Activated B cell treated with CpG ODN at 0.5 μM for 24 hours (primary cell): ENCODE measurements at regions of chr4 and their contacts with region 1.

Region 1: DNA sequence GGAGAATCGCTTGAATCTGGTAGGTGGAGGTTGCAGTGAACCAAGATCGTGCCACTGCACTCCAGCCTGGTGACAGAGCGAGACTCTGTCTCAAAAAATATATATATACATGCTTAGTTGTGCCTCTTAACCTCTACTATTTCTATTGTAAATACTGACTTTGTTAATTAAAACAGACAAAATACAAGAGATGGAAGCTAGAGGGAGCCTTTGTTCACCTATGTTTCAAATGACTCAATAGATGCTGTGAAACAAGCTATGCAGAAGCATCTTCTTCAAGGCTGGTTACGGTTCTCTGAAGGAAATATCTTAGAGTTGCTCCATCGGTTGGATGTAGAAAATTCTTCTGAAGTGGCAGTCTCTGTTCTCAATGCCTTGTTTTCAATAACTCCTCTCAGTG is 6.2 kb downstream of the NCAPG start:
- DNase-seq: no peak
- ATAC-seq: peak; percentile 82
- H3K4me3 Mint-ChIP-seq: no peak overlapping the region
- H3K27ac Mint-ChIP-seq: no peak overlapping the region
- H3K4me1 Mint-ChIP-seq: peaks cover 8% of the 10 kb centered on the region
- H3K27me3 Mint-ChIP-seq: no peaks in the 10 kb centered on the region
- CTCF ChIP-seq: no peak

Region 2: GRCh38 chr4:18138076-18138665 is 321.2 kb after region 1 on chr4:
- CTCF ChIA-PET with region 1: interaction called, 3 read pairs
- POLR2A ChIA-PET with region 1: no interaction called
- intact Hi-C with region 1: loop called (anchors 2 kb)
- DNase-seq: no peak
- ATAC-seq: no peak
- H3K4me3 Mint-ChIP-seq: no peak overlapping the region
- H3K27ac Mint-ChIP-seq: no peak overlapping the region
- H3K4me1 Mint-ChIP-seq: no peaks in the 10 kb centered on the region
- H3K27me3 Mint-ChIP-seq: peaks cover 5% of the 10 kb centered on the region
- CTCF ChIP-seq: no peak

Region 3: GRCh38 chr4:18366892-18367291 is 549.9 kb after region 1 on chr4:
- CTCF ChIA-PET with region 1: interaction called, 28 read pairs
- POLR2A ChIA-PET with region 1: no interaction called
- intact Hi-C with region 1: no loop called
- DNase-seq: no peak
- ATAC-seq: no peak
- H3K4me3 Mint-ChIP-seq: no peak overlapping the region
- H3K27ac Mint-ChIP-seq: no peak overlapping the region
- H3K4me1 Mint-ChIP-seq: no peaks in the 10 kb centered on the region
- H3K27me3 Mint-ChIP-seq: peaks cover 2% of the 10 kb centered on the region
- CTCF ChIP-seq: no peak

Region 4: DNA sequence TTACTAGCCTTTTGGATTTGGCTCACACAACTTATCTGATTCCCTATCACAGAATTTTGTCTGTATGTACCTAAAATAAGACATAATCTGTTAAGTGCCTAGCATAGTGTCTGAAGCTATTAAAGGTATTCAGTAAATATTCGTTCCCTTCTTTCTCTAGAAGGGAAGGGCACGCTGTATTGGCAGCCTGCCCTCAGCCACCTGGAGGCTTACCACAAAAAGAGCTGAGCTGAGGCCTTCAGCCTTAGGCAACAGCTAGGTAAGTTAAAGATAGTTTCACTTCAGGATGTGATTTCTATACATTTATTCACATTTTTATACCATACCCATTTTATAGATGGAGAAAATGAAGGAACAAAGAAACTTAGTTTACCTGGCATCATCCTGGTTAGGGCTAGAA is 604.5 kb after region 1 on chr4:
- CTCF ChIA-PET with region 1: no interaction called
- POLR2A ChIA-PET with region 1: interaction called, 10 read pairs
- intact Hi-C with region 1: no loop called
- DNase-seq: no peak
- ATAC-seq: no peak
- H3K4me3 Mint-ChIP-seq: no peak overlapping the region
- H3K27ac Mint-ChIP-seq: no peak overlapping the region
- H3K4me1 Mint-ChIP-seq: no peaks in the 10 kb centered on the region
- H3K27me3 Mint-ChIP-seq: no peaks in the 10 kb centered on the region
- CTCF ChIP-seq: no peak

Region 5: GRCh38 chr4:18593445-18594002 is 776.5 kb after region 1 on chr4:
- CTCF ChIA-PET with region 1: interaction called, 21 read pairs
- POLR2A ChIA-PET with region 1: no interaction called
- intact Hi-C with region 1: loop called (anchors 1 kb)
- DNase-seq: no peak
- ATAC-seq: no peak
- H3K4me3 Mint-ChIP-seq: no peak overlapping the region
- H3K27ac Mint-ChIP-seq: no peak overlapping the region
- H3K4me1 Mint-ChIP-seq: peaks cover 3% of the 10 kb centered on the region
- H3K27me3 Mint-ChIP-seq: peaks cover 10% of the 10 kb centered on the region
- CTCF ChIP-seq: peak; percentile 51